CD8-positive, alpha-beta T cell (primary cell): ENCODE measurements at regions of chr12 and their contacts with region 1.

Region 1: DNA sequence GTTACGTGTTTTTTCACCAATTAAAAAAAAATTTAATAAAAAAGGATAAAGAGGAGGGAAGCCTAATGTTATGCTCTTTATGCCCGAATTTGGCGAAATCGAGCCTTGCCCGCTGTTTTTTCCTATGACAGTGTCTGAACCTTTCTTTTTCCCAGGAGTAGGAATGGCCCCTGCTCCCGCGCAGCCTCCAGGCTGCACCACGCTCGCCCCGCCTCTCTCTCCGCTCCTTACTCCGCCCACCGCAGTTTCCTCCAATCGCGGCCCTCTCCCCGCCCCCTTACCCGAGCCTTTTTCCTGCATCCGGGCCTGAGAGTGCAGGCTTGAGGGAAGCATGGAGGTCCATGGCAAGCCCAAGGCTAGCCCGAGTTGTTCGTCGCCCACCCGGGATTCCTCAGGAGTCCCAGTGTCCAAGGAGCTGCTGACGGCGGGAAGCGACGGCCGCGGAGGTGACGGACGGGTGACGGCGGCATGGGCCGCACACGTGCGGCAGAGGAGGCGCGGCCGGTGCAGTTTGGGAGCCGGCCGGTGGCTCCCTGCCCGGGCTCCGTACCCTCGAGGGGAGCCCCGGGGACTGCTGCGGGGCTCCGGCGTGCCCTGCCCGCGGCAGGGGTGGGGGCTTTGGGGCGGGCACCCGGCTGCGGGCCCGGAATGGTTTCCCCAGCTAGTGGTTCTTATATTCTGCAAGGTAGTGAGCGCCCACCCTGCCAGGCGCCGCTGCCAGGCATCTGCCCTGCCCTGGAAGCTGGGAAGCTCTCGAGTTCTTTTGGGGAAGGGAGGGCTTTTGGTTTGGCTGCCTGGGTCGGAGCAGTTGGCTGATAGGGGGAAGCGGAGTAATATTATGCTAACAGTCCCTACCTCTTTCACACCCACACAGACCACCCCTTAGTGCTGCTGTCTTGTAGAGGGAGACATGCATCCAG is at the start of gene NOPCHAP1:
- DNase-seq: peak; percentile 66 to 89 (median 82)
- ATAC-seq: peak; percentile 98
- H3K4me3 ChIP-seq: peak within 1 kb of the TSS; percentile 70 to 93
- H3K4me3 Mint-ChIP-seq: peak within 1 kb of the TSS; percentile 90
- H3K27ac ChIP-seq: peak within 1 kb of the TSS; percentile 33 to 55
- H3K27ac Mint-ChIP-seq: peak within 1 kb of the TSS; percentile 80
- H3K4me1 ChIP-seq: peaks cover 16% of the 10 kb centered on the region
- H3K4me1 Mint-ChIP-seq: peaks cover 35% of the 10 kb centered on the region
- H3K27me3 ChIP-seq: no peaks in the 10 kb centered on the region
- H3K27me3 Mint-ChIP-seq: no peaks in the 10 kb centered on the region
- CTCF ChIP-seq: no peak
- total RNA-seq, gene NOPCHAP1: 13.2 to 16.5 TPM

Region 2: GRCh38 chr12:104147346-104147745 is 838.9 kb before region 1 on chr12:
- CTCF ChIA-PET with region 1: no interaction called
- POLR2A ChIA-PET with region 1: no interaction called
- intact Hi-C with region 1: loop called in 1 of 2 experiments (anchors 10 kb)
- DNase-seq: no peak
- ATAC-seq: no peak
- H3K4me3 ChIP-seq: no peak overlapping the region
- H3K4me3 Mint-ChIP-seq: no peak overlapping the region
- H3K27ac ChIP-seq: no peak overlapping the region
- H3K27ac Mint-ChIP-seq: no peak overlapping the region
- H3K4me1 ChIP-seq: no peaks in the 10 kb centered on the region
- H3K4me1 Mint-ChIP-seq: no peaks in the 10 kb centered on the region
- H3K27me3 ChIP-seq: peaks cover 0 to 3% of the 10 kb centered on the region in 2 experiments
- H3K27me3 Mint-ChIP-seq: peaks cover 5% of the 10 kb centered on the region
- CTCF ChIP-seq: no peak

Region 3: DNA sequence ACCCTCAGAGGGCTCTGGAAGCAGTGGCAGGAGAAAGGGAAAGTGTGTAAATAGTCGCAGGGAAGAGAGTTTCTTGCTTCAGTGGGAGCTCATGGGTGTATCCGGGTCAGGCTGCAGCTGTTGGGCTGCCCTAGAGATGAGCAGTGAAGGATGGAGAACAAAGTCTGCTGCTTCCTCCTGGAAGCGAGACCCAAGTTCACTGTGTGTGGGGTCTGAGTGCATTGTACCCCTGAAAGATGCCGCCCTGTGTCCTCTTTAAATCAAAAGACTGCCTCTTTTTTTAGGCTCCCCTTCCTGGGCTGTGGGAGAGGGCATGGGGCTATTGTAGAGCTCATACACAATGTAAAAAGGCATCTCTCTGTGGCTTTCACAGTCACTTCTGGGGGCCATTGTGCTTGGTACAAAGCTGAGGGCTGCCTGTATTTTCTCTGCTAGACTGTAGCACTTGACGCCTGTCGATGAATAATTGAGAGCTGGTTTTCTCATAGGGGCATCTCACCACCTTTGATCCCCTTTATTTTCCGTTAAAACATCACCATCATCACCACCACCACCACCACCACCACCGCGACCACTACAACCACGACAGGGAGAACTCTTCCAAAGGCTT is 512.8 kb before region 1 on chr12:
- CTCF ChIA-PET with region 1: no interaction called
- POLR2A ChIA-PET with region 1: no interaction called
- intact Hi-C with region 1: no loop called
- DNase-seq: peak in 2 of 9 experiments; percentile 19 to 50
- ATAC-seq: peak; percentile 39
- H3K4me3 ChIP-seq: no peak overlapping the region
- H3K4me3 Mint-ChIP-seq: peak overlapping the region; percentile 53
- H3K27ac ChIP-seq: peak overlapping the region in 1 of 2 experiments; percentile 63
- H3K27ac Mint-ChIP-seq: peak overlapping the region; percentile 69
- H3K4me1 ChIP-seq: peaks cover 65% of the 10 kb centered on the region
- H3K4me1 Mint-ChIP-seq: peaks cover 87% of the 10 kb centered on the region
- H3K27me3 ChIP-seq: no peaks in the 10 kb centered on the region
- H3K27me3 Mint-ChIP-seq: no peaks in the 10 kb centered on the region
- CTCF ChIP-seq: no peak

Region 4: DNA sequence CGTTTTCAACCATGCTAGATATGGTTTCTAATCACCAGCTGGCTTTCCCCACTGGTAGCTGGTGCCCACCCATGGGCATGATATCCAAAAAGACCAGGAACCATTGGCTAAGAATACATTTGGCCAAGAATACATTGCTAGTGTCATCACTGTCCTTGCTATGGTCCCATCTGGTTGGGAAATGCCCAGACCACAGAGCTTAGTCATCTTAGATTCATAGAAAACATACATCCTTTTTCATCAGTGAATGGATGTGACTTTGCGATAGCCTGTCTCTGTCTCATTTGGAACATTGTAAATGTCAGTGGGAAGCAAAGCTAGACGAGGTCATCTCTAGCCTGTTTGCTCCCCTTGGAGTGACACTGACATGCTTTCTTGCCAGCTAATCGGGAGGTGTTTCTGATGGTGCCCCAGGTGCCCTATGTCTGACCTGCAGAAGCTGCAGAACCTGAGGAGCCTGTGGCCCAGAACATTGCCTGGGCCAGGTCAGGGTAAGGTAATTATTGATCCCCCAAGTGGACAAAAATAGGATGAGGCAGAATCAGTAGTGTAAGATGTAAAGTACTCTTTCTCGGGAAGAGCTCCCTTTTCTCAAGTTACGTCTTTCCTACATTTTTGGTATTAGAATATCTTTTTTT is 223.0 kb before region 1 on chr12:
- CTCF ChIA-PET with region 1: no interaction called
- POLR2A ChIA-PET with region 1: no interaction called
- intact Hi-C with region 1: no loop called
- DNase-seq: peak in 1 of 9 experiments; percentile 29
- ATAC-seq: no peak
- H3K4me3 ChIP-seq: no peak overlapping the region
- H3K4me3 Mint-ChIP-seq: no peak overlapping the region
- H3K27ac ChIP-seq: no peak overlapping the region
- H3K27ac Mint-ChIP-seq: no peak overlapping the region
- H3K4me1 ChIP-seq: peaks cover 11% of the 10 kb centered on the region
- H3K4me1 Mint-ChIP-seq: peaks cover 26% of the 10 kb centered on the region
- H3K27me3 ChIP-seq: no peaks in the 10 kb centered on the region
- H3K27me3 Mint-ChIP-seq: no peaks in the 10 kb centered on the region
- CTCF ChIP-seq: no peak

Region 5: GRCh38 chr12:104877123-104877705 is 109.1 kb before region 1 on chr12:
- CTCF ChIA-PET with region 1: no interaction called
- POLR2A ChIA-PET with region 1: no interaction called
- intact Hi-C with region 1: no loop called
- DNase-seq: peak; percentile 3 to 60 (median 31)
- ATAC-seq: no peak
- H3K4me3 ChIP-seq: no peak overlapping the region
- H3K4me3 Mint-ChIP-seq: no peak overlapping the region
- H3K27ac ChIP-seq: no peak overlapping the region
- H3K27ac Mint-ChIP-seq: no peak overlapping the region
- H3K4me1 ChIP-seq: no peaks in the 10 kb centered on the region
- H3K4me1 Mint-ChIP-seq: no peaks in the 10 kb centered on the region
- H3K27me3 ChIP-seq: no peaks in the 10 kb centered on the region
- H3K27me3 Mint-ChIP-seq: no peaks in the 10 kb centered on the region
- CTCF ChIP-seq: peak; percentile 83

Region 6: DNA sequence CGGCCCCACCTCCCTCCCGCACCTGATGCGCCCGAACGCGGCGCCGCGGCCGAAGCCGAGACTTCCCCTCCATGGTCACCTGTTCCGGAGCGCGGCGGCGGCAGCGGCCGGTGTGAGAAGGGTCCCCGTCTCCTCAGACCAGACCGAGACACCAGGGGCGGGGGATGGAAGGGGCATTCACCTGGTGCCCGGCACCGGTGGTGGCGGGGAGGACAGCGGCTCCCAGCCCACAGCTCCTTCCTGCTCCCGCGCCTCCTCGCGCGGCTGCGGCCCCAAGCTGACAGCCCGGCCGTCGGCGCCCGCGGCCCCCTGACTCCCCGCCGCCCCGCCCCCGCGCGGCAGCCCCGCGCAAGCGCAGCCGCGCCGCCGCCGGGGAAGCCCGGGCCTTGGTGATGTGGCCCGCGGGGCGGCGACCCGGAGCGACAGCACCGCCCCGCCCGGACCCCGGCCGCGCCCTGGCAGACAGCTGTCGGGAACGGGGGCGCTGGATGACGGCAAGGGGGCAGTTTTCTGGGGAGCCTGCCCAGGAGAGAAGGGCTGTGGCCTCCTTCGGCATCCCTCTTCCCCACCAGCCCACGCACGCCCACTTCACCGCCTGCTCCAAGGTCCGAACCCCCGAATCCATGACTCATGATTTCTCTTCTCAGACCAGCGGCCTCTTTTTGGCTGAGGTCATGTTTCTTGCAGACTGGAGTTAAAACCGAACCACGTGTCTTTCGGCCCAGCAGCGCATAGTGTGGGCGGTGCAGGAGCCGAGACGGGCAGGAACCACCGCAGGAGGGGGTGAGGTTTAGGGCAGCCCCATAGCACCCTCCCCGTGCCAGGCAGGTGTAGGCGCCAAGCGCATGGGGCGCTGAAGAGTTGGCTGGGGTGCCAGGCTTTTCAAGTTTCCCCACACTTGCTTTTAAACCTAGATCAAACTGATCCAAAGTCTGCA is 28.0 kb before region 1 on chr12 and contains the start of gene SLC41A2:
- CTCF ChIA-PET with region 1: no interaction called
- POLR2A ChIA-PET with region 1: interaction called, 3 read pairs
- intact Hi-C with region 1: loop called (anchors 1 kb)
- DNase-seq: peak; percentile 52 to 90 (median 76)
- ATAC-seq: peak; percentile 90
- H3K4me3 ChIP-seq: peak within 1 kb of the TSS; percentile 61 to 97
- H3K4me3 Mint-ChIP-seq: peak within 1 kb of the TSS; percentile 94
- H3K27ac ChIP-seq: peak within 1 kb of the TSS; percentile 40 to 42
- H3K27ac Mint-ChIP-seq: peak within 1 kb of the TSS; percentile 85
- H3K4me1 ChIP-seq: peaks cover 13% of the 10 kb centered on the region
- H3K4me1 Mint-ChIP-seq: peaks cover 19% of the 10 kb centered on the region
- H3K27me3 ChIP-seq: no peaks in the 10 kb centered on the region
- H3K27me3 Mint-ChIP-seq: peaks cover 17% of the 10 kb centered on the region
- CTCF ChIP-seq: no peak
- total RNA-seq, gene SLC41A2: 3.4 to 4.2 TPM

Region 7: GRCh38 chr12:105141320-105141918 is 155.1 kb after region 1 on chr12:
- CTCF ChIA-PET with region 1: no interaction called
- POLR2A ChIA-PET with region 1: no interaction called
- intact Hi-C with region 1: no loop called
- DNase-seq: no peak
- ATAC-seq: no peak
- H3K4me3 ChIP-seq: no peak overlapping the region
- H3K4me3 Mint-ChIP-seq: no peak overlapping the region
- H3K27ac ChIP-seq: no peak overlapping the region
- H3K27ac Mint-ChIP-seq: peak overlapping the region; percentile 55
- H3K4me1 ChIP-seq: no peaks in the 10 kb centered on the region
- H3K4me1 Mint-ChIP-seq: peaks cover 15% of the 10 kb centered on the region
- H3K27me3 ChIP-seq: no peaks in the 10 kb centered on the region
- H3K27me3 Mint-ChIP-seq: no peaks in the 10 kb centered on the region
- CTCF ChIP-seq: no peak